CD4-positive, alpha-beta T cell (primary cell): ENCODE measurements at regions of chr2 and their contacts with region 1.

Region 1: GRCh38 chr2:43131024-43131889 is 95.1 kb downstream of the ZFP36L2 start:
- DNase-seq: peak; percentile 65 to 97 (median 80)
- ATAC-seq: peak; percentile 42
- H3K4me3 ChIP-seq: peak overlapping the region; percentile 21
- H3K4me3 Mint-ChIP-seq: peak overlapping the region; percentile 46
- H3K27ac ChIP-seq: peak overlapping the region; percentile 83 to 96
- H3K27ac Mint-ChIP-seq: peak overlapping the region; percentile 99
- H3K4me1 ChIP-seq: peaks cover 97% of the 10 kb centered on the region
- H3K4me1 Mint-ChIP-seq: peaks cover 89% of the 10 kb centered on the region
- H3K27me3 ChIP-seq: no peaks in the 10 kb centered on the region
- H3K27me3 Mint-ChIP-seq: no peaks in the 10 kb centered on the region
- CTCF ChIP-seq: peak; percentile 51

Region 2: GRCh38 chr2:42828487-42829425 is 302.5 kb before region 1 on chr2:
- CTCF ChIA-PET with region 1: no interaction called
- POLR2A ChIA-PET with region 1: no interaction called
- intact Hi-C with region 1: loop called in 1 of 2 experiments (anchors 10 kb)
- DNase-seq: peak; percentile 51 to 86 (median 60)
- ATAC-seq: peak; percentile 93
- H3K4me3 ChIP-seq: no peak overlapping the region
- H3K4me3 Mint-ChIP-seq: no peak overlapping the region
- H3K27ac ChIP-seq: no peak overlapping the region
- H3K27ac Mint-ChIP-seq: no peak overlapping the region
- H3K4me1 ChIP-seq: peaks cover 19% of the 10 kb centered on the region
- H3K4me1 Mint-ChIP-seq: peaks cover 18% of the 10 kb centered on the region
- H3K27me3 ChIP-seq: no peaks in the 10 kb centered on the region
- H3K27me3 Mint-ChIP-seq: peaks cover 6% of the 10 kb centered on the region
- CTCF ChIP-seq: peak; percentile 83

Region 3: GRCh38 chr2:43024515-43025011 is 106.7 kb before region 1 on chr2:
- CTCF ChIA-PET with region 1: no interaction called
- POLR2A ChIA-PET with region 1: interaction called, 3 read pairs
- intact Hi-C with region 1: loop called in 1 of 2 experiments (anchors 5 kb)
- DNase-seq: peak in 13 of 14 experiments; percentile 9 to 62 (median 37)
- ATAC-seq: peak; percentile 66
- H3K4me3 ChIP-seq: no peak overlapping the region
- H3K4me3 Mint-ChIP-seq: no peak overlapping the region
- H3K27ac ChIP-seq: no peak overlapping the region
- H3K27ac Mint-ChIP-seq: peak overlapping the region; percentile 69
- H3K4me1 ChIP-seq: peaks cover 10% of the 10 kb centered on the region
- H3K4me1 Mint-ChIP-seq: peaks cover 28% of the 10 kb centered on the region
- H3K27me3 ChIP-seq: no peaks in the 10 kb centered on the region
- H3K27me3 Mint-ChIP-seq: no peaks in the 10 kb centered on the region
- CTCF ChIP-seq: peak; percentile 67

Region 4: DNA sequence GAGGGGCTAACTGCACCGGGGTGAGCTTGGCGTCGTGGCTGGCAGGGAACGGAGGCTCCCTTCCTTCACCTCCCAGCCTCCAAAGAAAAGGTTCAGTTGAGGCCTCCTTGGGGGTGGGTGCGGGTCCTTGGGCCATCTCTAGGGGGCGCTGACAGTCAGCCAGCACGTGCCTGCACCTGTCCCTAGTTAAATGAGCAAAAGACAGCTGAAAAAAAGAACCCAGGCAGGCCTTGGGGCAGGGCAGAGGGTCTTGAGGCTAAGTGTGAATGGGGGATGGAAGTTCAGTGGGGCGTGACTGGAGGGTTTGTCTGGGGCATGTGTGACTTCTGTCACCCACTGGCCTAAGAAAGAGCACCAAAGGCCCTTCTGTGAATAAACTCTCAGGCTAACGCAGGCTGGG is 38.7 kb after region 1 on chr2:
- CTCF ChIA-PET with region 1: interaction called, 12 read pairs
- POLR2A ChIA-PET with region 1: interaction called, 165 read pairs
- intact Hi-C with region 1: loop called (anchors 1 to 2 kb)
- DNase-seq: peak; percentile 49 to 83 (median 70)
- ATAC-seq: peak; percentile 16
- H3K4me3 ChIP-seq: peak overlapping the region; percentile 26
- H3K4me3 Mint-ChIP-seq: peak overlapping the region; percentile 13
- H3K27ac ChIP-seq: peak overlapping the region; percentile 72 to 76
- H3K27ac Mint-ChIP-seq: peak overlapping the region; percentile 97
- H3K4me1 ChIP-seq: peaks cover 85% of the 10 kb centered on the region
- H3K4me1 Mint-ChIP-seq: peaks cover 82% of the 10 kb centered on the region
- H3K27me3 ChIP-seq: no peaks in the 10 kb centered on the region
- H3K27me3 Mint-ChIP-seq: no peaks in the 10 kb centered on the region
- CTCF ChIP-seq: peak; percentile 75

Region 5: GRCh38 chr2:43219383-43220228 is 88.3 kb after region 1 on chr2:
- CTCF ChIA-PET with region 1: interaction called, 303 read pairs
- POLR2A ChIA-PET with region 1: interaction called, 1,478 read pairs
- intact Hi-C with region 1: loop called in 1 of 2 experiments (anchors 1 kb)
- DNase-seq: peak; percentile 65 to 93 (median 76)
- ATAC-seq: peak; percentile 38
- H3K4me3 ChIP-seq: peak overlapping the region; percentile 97
- H3K4me3 Mint-ChIP-seq: peak overlapping the region; percentile 87
- H3K27ac ChIP-seq: peak overlapping the region; percentile 62 to 92
- H3K27ac Mint-ChIP-seq: peak overlapping the region; percentile 98
- H3K4me1 ChIP-seq: peaks cover 69% of the 10 kb centered on the region
- H3K4me1 Mint-ChIP-seq: peaks cover 62% of the 10 kb centered on the region
- H3K27me3 ChIP-seq: no peaks in the 10 kb centered on the region
- H3K27me3 Mint-ChIP-seq: peaks cover 19% of the 10 kb centered on the region
- CTCF ChIP-seq: no peak

Region 6: DNA sequence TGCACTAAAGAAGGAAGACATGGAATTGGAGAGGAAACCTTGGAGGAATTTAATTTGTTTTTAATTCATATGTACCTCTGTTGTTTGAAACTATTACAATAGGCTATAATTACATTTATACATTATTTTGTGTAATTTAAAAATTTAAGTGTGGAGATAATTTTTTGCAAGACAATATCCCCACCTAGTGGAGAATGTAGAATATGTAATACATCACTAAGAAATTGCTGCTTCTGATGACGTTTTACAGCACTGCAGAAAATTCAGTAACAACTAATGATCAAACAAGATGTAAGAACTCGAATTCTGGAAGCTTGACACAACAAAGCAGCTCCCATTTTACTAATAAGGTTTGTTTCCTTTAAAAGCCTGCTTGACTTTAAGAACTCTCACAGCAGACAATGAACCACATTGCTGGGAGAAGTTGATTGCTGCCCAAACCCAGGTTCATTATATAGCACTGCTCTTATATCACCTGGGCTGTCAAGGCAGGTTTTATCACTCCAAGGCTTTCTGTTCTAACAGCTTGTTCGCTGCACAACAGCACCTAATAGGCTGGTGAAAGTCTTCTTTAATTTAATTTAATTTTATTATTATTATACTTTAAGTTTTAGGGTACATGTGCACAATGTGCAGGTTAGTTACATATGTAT is 411.2 kb after region 1 on chr2:
- CTCF ChIA-PET with region 1: no interaction called
- POLR2A ChIA-PET with region 1: no interaction called
- intact Hi-C with region 1: loop called (anchors 5 kb)
- DNase-seq: peak in 3 of 14 experiments; percentile 63 to 68 (median 65)
- ATAC-seq: peak; percentile 89
- H3K4me3 ChIP-seq: no peak overlapping the region
- H3K4me3 Mint-ChIP-seq: no peak overlapping the region
- H3K27ac ChIP-seq: no peak overlapping the region
- H3K27ac Mint-ChIP-seq: no peak overlapping the region
- H3K4me1 ChIP-seq: peaks cover 3% of the 10 kb centered on the region
- H3K4me1 Mint-ChIP-seq: peaks cover 16% of the 10 kb centered on the region
- H3K27me3 ChIP-seq: no peaks in the 10 kb centered on the region
- H3K27me3 Mint-ChIP-seq: no peaks in the 10 kb centered on the region
- CTCF ChIP-seq: peak; percentile 78

Region 7: DNA sequence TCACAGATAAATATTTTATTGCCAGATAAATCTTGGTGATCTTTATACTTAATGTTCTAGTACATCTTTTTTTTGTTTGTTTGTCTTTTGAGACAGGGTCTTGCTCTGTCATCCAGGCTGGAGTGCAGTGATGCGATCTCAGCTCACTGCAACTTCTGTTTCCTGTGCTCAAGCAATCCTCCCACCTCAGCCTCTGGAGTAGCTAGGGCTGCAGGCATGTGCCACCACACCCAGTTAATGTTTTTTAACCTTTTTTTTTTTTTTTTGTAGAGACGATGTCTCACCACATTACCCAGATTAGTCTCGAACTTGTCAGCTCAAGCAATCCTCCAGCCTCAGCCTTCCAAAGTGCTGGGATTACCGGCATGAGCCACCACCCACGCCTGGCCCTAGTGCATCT is 554.1 kb after region 1 on chr2:
- CTCF ChIA-PET with region 1: no interaction called
- POLR2A ChIA-PET with region 1: no interaction called
- intact Hi-C with region 1: no loop called
- DNase-seq: no peak
- ATAC-seq: no peak
- H3K4me3 ChIP-seq: no peak overlapping the region
- H3K4me3 Mint-ChIP-seq: no peak overlapping the region
- H3K27ac ChIP-seq: no peak overlapping the region
- H3K27ac Mint-ChIP-seq: no peak overlapping the region
- H3K4me1 ChIP-seq: no peaks in the 10 kb centered on the region
- H3K4me1 Mint-ChIP-seq: no peaks in the 10 kb centered on the region
- H3K27me3 ChIP-seq: no peaks in the 10 kb centered on the region
- H3K27me3 Mint-ChIP-seq: peaks cover 17% of the 10 kb centered on the region
- CTCF ChIP-seq: no peak